ENCODE measurements at regions of chr6 and their contacts with region 1.

Region 1: GRCh38 chr6:72084992-72085569 is 198.7 kb downstream of the RIMS1 start:
- DNase-seq: peak in 1 of 4 experiments; percentile 21
- ATAC-seq: no peak
- H3K4me3 ChIP-seq: no peak overlapping the region
- H3K27ac ChIP-seq: no peak overlapping the region
- H3K4me1 ChIP-seq: no peaks in the 10 kb centered on the region
- H3K27me3 ChIP-seq: no peaks in the 10 kb centered on the region
- CTCF ChIP-seq: peak in 1 of 3 experiments; percentile 58; a peak in 2 of 6 replicates
- EP300 ChIP-seq: no peak
- POLR2A ChIP-seq: no peak
- RAD21 ChIP-seq: peak; percentile 53 to 60

Region 2: DNA sequence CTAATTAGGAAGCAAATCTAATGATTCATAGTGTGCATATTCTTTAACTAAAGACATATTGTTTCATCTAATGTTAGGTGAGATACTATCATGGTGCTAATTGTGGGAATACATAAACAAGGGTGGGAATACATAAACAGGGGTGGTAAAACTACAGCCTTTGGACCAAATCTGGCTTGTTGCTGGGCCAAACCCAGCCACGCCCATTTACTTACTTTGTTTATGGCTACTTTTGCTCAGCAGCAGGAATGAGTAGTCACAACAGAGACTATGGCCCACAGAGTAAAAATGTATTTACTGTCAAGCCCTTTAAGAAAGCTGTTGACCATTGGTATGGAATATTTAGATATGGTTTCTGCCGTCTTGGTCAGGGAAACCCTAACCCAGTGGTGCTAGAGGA is 1640.1 kb before region 1 on chr6:
- CTCF ChIA-PET with region 1: no interaction called
- POLR2A ChIA-PET with region 1: no interaction called
- in situ Hi-C with region 1: no loop called
- intact Hi-C with region 1: no loop called
- DNase-seq: no peak
- ATAC-seq: no peak
- H3K4me3 ChIP-seq: no peak overlapping the region
- H3K27ac ChIP-seq: no peak overlapping the region
- H3K4me1 ChIP-seq: no peaks in the 10 kb centered on the region
- H3K27me3 ChIP-seq: no peaks in the 10 kb centered on the region
- CTCF ChIP-seq: no peak
- EP300 ChIP-seq: no peak
- POLR2A ChIP-seq: no peak
- RAD21 ChIP-seq: no peak

Region 3: GRCh38 chr6:71211799-71212198 is 873.3 kb before region 1 on chr6:
- CTCF ChIA-PET with region 1: no interaction called
- POLR2A ChIA-PET with region 1: no interaction called
- in situ Hi-C with region 1: no loop called
- intact Hi-C with region 1: no loop called
- DNase-seq: no peak
- ATAC-seq: no peak
- H3K4me3 ChIP-seq: no peak overlapping the region
- H3K27ac ChIP-seq: no peak overlapping the region
- H3K4me1 ChIP-seq: no peaks in the 10 kb centered on the region
- H3K27me3 ChIP-seq: no peaks in the 10 kb centered on the region
- CTCF ChIP-seq: no peak
- EP300 ChIP-seq: no peak
- POLR2A ChIP-seq: no peak
- RAD21 ChIP-seq: no peak

Region 4: GRCh38 chr6:71383901-71384489 is 701.1 kb before region 1 on chr6:
- CTCF ChIA-PET with region 1: interaction called, 13 read pairs
- POLR2A ChIA-PET with region 1: no interaction called
- in situ Hi-C with region 1: loop called (anchors 10 kb)
- intact Hi-C with region 1: loop called (anchors 1 kb)
- DNase-seq: peak in 3 of 4 experiments; percentile 8 to 27 (median 11)
- ATAC-seq: no peak
- H3K4me3 ChIP-seq: no peak overlapping the region
- H3K27ac ChIP-seq: no peak overlapping the region
- H3K4me1 ChIP-seq: no peaks in the 10 kb centered on the region
- H3K27me3 ChIP-seq: no peaks in the 10 kb centered on the region
- CTCF ChIP-seq: peak; percentile 34 to 66 (median 37); a peak in 3 of 6 replicates
- EP300 ChIP-seq: no peak
- POLR2A ChIP-seq: no peak
- RAD21 ChIP-seq: peak; percentile 28 to 59

Region 5: DNA sequence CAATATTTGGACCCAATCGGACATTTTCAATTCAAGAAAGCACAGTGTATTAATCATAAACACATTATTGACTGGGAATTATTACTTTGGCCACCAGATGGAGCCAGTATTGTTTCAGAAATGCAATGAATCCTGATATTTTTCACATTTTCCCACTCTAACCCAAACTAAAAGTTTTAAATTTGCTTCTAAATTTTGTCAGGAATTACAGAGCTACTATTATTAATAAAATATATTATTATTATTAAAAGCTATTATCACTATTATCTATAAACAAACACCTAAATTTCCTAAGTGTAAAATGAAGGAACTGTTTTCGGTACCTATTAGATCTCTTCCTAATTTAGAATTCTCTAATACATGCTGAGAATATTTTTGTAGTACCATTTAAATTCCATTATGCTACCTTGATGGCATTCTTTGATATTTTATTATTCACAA is 551.1 kb before region 1 on chr6:
- CTCF ChIA-PET with region 1: no interaction called
- POLR2A ChIA-PET with region 1: no interaction called
- in situ Hi-C with region 1: loop called (anchors 25 kb)
- intact Hi-C with region 1: loop called (anchors 2 kb)
- DNase-seq: peak; percentile 13 to 27 (median 20)
- ATAC-seq: no peak
- H3K4me3 ChIP-seq: no peak overlapping the region
- H3K27ac ChIP-seq: no peak overlapping the region
- H3K4me1 ChIP-seq: no peaks in the 10 kb centered on the region
- H3K27me3 ChIP-seq: no peaks in the 10 kb centered on the region; a peak in 1 of 5 replicates
- CTCF ChIP-seq: peak in 2 of 3 experiments; percentile 26 to 52; a peak in 3 of 6 replicates
- EP300 ChIP-seq: no peak
- POLR2A ChIP-seq: no peak
- RAD21 ChIP-seq: peak; percentile 44 to 57

Region 6: DNA sequence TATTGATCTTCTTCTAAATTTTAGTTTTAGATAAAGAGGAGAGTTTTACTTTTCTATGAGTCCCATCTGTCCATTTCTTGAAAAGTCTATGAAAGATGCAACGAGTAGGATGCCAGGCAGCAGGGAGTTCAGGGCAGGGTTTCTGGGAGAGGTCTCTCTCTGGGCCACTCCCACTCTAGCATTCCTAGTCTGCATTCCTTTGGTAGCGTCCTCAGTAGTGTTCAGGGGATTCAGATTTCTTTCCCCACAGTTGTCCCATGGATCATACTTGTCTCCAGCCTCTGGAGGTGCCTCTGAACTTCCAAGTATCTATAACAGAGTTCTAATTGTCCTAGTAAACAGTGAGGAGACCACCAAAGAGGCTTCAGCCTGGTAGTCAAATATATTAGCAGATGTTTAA is 26.5 kb after region 1 on chr6:
- CTCF ChIA-PET with region 1: no interaction called
- POLR2A ChIA-PET with region 1: no interaction called
- in situ Hi-C with region 1: no loop called
- intact Hi-C with region 1: no loop called
- DNase-seq: no peak
- ATAC-seq: no peak
- H3K4me3 ChIP-seq: no peak overlapping the region
- H3K27ac ChIP-seq: no peak overlapping the region
- H3K4me1 ChIP-seq: no peaks in the 10 kb centered on the region
- H3K27me3 ChIP-seq: no peaks in the 10 kb centered on the region
- CTCF ChIP-seq: no peak
- EP300 ChIP-seq: no peak
- POLR2A ChIP-seq: no peak
- RAD21 ChIP-seq: no peak

Measured in K562 (cell line).